ENCODE measurements at regions of chr5 and their contacts with region 1.

Region 1: GRCh38 chr5:57887851-57888621 is 405.4 kb upstream of the ACTBL2 start:
- DNase-seq: peak; percentile 27
- ATAC-seq: peak; percentile 89
- H3K4me3 ChIP-seq: no peak overlapping the region
- H3K27ac ChIP-seq: peak overlapping the region; percentile 95
- H3K4me1 ChIP-seq: peaks cover 31% of the 10 kb centered on the region
- H3K27me3 ChIP-seq: no peaks in the 10 kb centered on the region
- CTCF ChIP-seq: peak; percentile 90

Region 2: GRCh38 chr5:57209351-57210040 is 678.5 kb before region 1 on chr5:
- CTCF ChIA-PET with region 1: no interaction called
- POLR2A ChIA-PET with region 1: no interaction called
- in situ Hi-C with region 1: no loop called
- intact Hi-C with region 1: no loop called
- DNase-seq: no peak
- ATAC-seq: peak; percentile 50; the same call in 1 of the 2 replicates
- H3K4me3 ChIP-seq: no peak overlapping the region
- H3K27ac ChIP-seq: no peak overlapping the region
- H3K4me1 ChIP-seq: 0 out of 2 replicates have a peak, but pooled peaks cover 3% of the 10 kb centered on the region
- H3K27me3 ChIP-seq: no peaks in the 10 kb centered on the region
- CTCF ChIP-seq: no peak

Region 3: DNA sequence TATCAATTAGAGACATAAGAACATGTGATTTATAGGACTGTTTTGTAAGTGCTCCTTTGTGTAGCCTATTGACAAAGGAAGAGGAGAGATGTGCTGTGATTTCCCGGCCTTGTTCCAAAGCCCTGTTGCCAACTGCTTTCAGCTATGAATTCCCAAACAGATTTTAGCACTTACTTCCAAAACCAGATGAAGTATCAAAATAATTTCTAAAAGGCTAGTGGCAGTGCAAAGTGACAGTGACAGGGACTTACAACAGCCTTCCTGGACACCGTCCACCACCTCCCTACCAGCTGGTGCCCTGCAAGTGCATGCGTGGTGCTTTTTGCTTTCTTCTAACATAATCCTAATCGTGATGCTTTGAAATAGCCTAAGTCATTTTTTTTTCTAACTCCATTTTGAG is 151.3 kb before region 1 on chr5:
- CTCF ChIA-PET with region 1: no interaction called
- POLR2A ChIA-PET with region 1: no interaction called
- in situ Hi-C with region 1: no loop called
- intact Hi-C with region 1: no loop called
- DNase-seq: no peak
- ATAC-seq: no peak
- H3K4me3 ChIP-seq: no peak overlapping the region
- H3K27ac ChIP-seq: peak overlapping the region; percentile 73
- H3K4me1 ChIP-seq: peaks cover 4% of the 10 kb centered on the region
- H3K27me3 ChIP-seq: no peaks in the 10 kb centered on the region
- CTCF ChIP-seq: no peak

Region 4: GRCh38 chr5:57779383-57780223 is 108.4 kb before region 1 on chr5:
- CTCF ChIA-PET with region 1: interaction called, 5 read pairs
- POLR2A ChIA-PET with region 1: no interaction called
- in situ Hi-C with region 1: no loop called
- intact Hi-C with region 1: loop called (anchors 5 kb)
- DNase-seq: peak; percentile 61
- ATAC-seq: peak; percentile 89
- H3K4me3 ChIP-seq: no peak overlapping the region
- H3K27ac ChIP-seq: peak overlapping the region; percentile 89
- H3K4me1 ChIP-seq: peaks cover 28% of the 10 kb centered on the region
- H3K27me3 ChIP-seq: no peaks in the 10 kb centered on the region
- CTCF ChIP-seq: peak; percentile 71

Region 5: DNA sequence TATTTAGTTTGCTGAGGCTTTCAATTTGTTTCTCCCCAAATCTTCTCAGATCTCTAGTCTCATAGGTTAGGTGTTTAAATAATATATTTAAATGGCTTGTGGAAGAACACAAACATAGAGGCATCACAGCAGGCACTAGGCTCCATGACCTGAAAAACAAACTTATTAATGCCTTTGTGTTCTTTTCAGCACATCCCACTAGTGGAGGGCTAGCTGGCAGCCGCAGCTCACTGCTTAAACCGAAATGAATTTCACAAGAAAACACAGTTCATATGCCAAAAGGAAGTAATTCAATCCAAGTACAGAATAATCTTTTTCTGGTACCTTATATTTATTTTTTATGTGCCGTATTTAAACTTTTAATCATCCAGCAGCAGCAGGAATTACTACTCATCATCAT is 189.4 kb after region 1 on chr5:
- CTCF ChIA-PET with region 1: no interaction called
- POLR2A ChIA-PET with region 1: no interaction called
- in situ Hi-C with region 1: no loop called
- intact Hi-C with region 1: loop called (anchors 5 kb)
- DNase-seq: no peak
- ATAC-seq: 0 out of 2 replicates have a peak, but pooled peaks have one; percentile 51
- H3K4me3 ChIP-seq: no peak overlapping the region
- H3K27ac ChIP-seq: peak overlapping the region; percentile 90
- H3K4me1 ChIP-seq: peaks cover 68% of the 10 kb centered on the region
- H3K27me3 ChIP-seq: no peaks in the 10 kb centered on the region
- CTCF ChIP-seq: no peak

Region 6: GRCh38 chr5:58188262-58188651 is 300.2 kb after region 1 on chr5:
- CTCF ChIA-PET with region 1: no interaction called
- POLR2A ChIA-PET with region 1: no interaction called
- in situ Hi-C with region 1: no loop called
- intact Hi-C with region 1: loop called (anchors 2 kb)
- DNase-seq: peak; percentile 73
- ATAC-seq: peak; percentile 96
- H3K4me3 ChIP-seq: peak overlapping the region in 1 of 2 experiments; percentile 31; a peak in 2 of 4 replicates
- H3K27ac ChIP-seq: peak overlapping the region; percentile 100
- H3K4me1 ChIP-seq: peaks cover 57% of the 10 kb centered on the region
- H3K27me3 ChIP-seq: no peaks in the 10 kb centered on the region
- CTCF ChIP-seq: peak; percentile 26; the same call in 1 of the 2 replicates

Measured in Panc1 (cell line).